GM12878 (cell line): ENCODE measurements at regions of chr17 and their contacts with region 1.

Region 1: GRCh38 chr17:49952209-49952911 is 16.6 kb upstream of the DLX4 start:
- DNase-seq: no peak
- ATAC-seq: peak; percentile 99
- H3K4me3 ChIP-seq: no peak overlapping the region
- H3K27ac ChIP-seq: no peak overlapping the region
- H3K4me1 ChIP-seq: no peaks in the 10 kb centered on the region
- H3K27me3 ChIP-seq: peaks cover 0 to 2% of the 10 kb centered on the region in 2 experiments; a peak in 3 of 4 replicates
- CTCF ChIP-seq: peak; percentile 78 to 97 (median 96)
- EP300 ChIP-seq: no peak
- POLR2A ChIP-seq: no peak
- RAD21 ChIP-seq: peak; percentile 54

Region 2: DNA sequence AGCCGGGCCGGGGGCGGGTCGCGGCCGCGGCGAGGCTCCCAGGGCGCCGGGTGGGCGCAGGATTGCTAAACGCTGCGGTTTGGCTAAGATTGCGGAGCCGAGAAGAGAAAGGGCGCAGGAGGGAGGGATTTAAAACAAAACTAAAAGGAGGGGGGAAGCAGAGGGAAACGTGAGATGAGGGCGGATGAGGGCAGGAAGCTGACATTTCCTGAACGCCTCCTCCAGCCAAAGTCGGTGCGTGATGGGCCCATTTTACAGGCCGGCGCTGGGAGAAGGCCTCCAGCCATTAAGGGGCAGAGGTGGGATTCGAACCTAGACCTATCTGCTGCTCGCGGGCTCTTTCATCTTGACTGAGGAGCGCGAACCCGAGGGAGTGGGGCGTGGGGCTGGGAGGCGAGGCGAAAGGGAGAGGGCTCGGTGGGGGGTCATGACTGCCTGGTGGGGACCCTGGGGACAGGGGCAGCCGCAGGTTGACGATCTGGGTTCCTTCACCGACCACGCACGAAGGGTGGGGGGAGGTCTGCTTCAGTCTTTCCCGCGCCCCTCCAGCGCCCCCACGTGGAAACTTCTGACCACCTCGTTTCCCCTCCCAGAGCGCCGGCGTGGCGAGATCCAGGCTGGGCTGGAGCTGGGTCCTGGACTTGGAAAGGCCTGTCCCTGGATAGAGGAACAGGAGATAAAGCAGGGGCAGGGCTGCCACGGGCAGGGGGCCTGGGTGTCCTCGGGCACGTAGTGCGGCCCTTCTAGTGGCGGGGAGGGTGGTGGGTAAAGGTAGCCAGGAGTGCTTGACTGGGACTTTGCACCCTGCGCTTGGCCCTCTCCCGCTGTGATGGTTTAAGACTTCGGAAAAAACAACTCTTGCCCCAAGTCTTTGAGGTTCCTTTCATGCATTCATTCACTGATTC is 100.7 kb before region 1 on chr17:
- CTCF ChIA-PET with region 1: no interaction called
- POLR2A ChIA-PET with region 1: no interaction called
- RAD21 ChIA-PET with region 1: no interaction called
- SMC1A ChIA-PET with region 1: no interaction called
- in situ Hi-C with region 1: no loop called
- intact Hi-C with region 1: no loop called
- DNase-seq: no peak
- ATAC-seq: peak; percentile 78
- H3K4me3 ChIP-seq: peak overlapping the region; percentile 70
- H3K27ac ChIP-seq: no peak overlapping the region
- H3K4me1 ChIP-seq: no peaks in the 10 kb centered on the region
- H3K27me3 ChIP-seq: no peaks in the 10 kb centered on the region; a peak in 3 of 4 replicates
- CTCF ChIP-seq: peak; percentile 58 to 70 (median 65)
- EP300 ChIP-seq: no peak
- POLR2A ChIP-seq: no peak; the same call in 1 of the 2 replicates
- RAD21 ChIP-seq: peak; percentile 53

Region 3: GRCh38 chr17:49939318-49939717 is 13.0 kb before region 1 on chr17:
- CTCF ChIA-PET with region 1: interaction called, 14 read pairs
- POLR2A ChIA-PET with region 1: no interaction called
- RAD21 ChIA-PET with region 1: no interaction called
- SMC1A ChIA-PET with region 1: no interaction called
- in situ Hi-C with region 1: no loop called
- intact Hi-C with region 1: no loop called
- DNase-seq: no peak
- ATAC-seq: no peak
- H3K4me3 ChIP-seq: no peak overlapping the region
- H3K27ac ChIP-seq: no peak overlapping the region
- H3K4me1 ChIP-seq: no peaks in the 10 kb centered on the region
- H3K27me3 ChIP-seq: peaks cover 1 to 6% of the 10 kb centered on the region in 2 experiments; a peak in 2 of 4 replicates
- CTCF ChIP-seq: no peak
- EP300 ChIP-seq: no peak
- POLR2A ChIP-seq: no peak
- RAD21 ChIP-seq: no peak

Region 4: GRCh38 chr17:49980703-49981197 is 28.4 kb after region 1 on chr17:
- CTCF ChIA-PET with region 1: interaction called, 11 read pairs
- POLR2A ChIA-PET with region 1: no interaction called
- RAD21 ChIA-PET with region 1: no interaction called
- SMC1A ChIA-PET with region 1: no interaction called
- in situ Hi-C with region 1: no loop called
- intact Hi-C with region 1: no loop called
- DNase-seq: no peak
- ATAC-seq: no peak
- H3K4me3 ChIP-seq: no peak overlapping the region
- H3K27ac ChIP-seq: no peak overlapping the region
- H3K4me1 ChIP-seq: no peaks in the 10 kb centered on the region
- H3K27me3 ChIP-seq: peaks cover 0 to 6% of the 10 kb centered on the region in 2 experiments; a peak in 3 of 4 replicates
- CTCF ChIP-seq: no peak
- EP300 ChIP-seq: no peak
- POLR2A ChIP-seq: no peak
- RAD21 ChIP-seq: no peak

Region 5: DNA sequence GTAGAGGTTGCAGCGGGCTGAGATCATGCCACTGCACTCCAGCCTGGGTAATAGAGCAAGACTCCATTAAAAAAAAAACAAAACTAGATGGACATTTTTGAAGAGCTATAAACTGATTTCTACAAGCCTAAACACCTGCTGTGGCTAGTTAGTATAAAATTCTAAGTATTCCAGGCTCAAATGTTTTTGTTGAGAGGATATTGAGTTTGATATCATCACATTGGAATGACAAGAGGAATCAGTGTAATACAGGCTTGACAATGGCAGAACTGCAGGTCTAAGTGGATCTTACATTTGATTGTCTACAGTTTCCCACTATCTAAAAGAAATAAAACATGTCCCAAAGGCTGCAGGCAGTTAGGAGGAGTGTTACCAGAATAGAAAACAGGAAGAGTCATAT is 66.5 kb after region 1 on chr17:
- CTCF ChIA-PET with region 1: no interaction called
- POLR2A ChIA-PET with region 1: no interaction called
- RAD21 ChIA-PET with region 1: no interaction called
- SMC1A ChIA-PET with region 1: no interaction called
- in situ Hi-C with region 1: no loop called
- intact Hi-C with region 1: no loop called
- DNase-seq: no peak
- ATAC-seq: no peak
- H3K4me3 ChIP-seq: no peak overlapping the region
- H3K27ac ChIP-seq: no peak overlapping the region
- H3K4me1 ChIP-seq: no peaks in the 10 kb centered on the region
- H3K27me3 ChIP-seq: no peaks in the 10 kb centered on the region
- CTCF ChIP-seq: no peak
- EP300 ChIP-seq: no peak
- POLR2A ChIP-seq: no peak
- RAD21 ChIP-seq: no peak

Region 6: DNA sequence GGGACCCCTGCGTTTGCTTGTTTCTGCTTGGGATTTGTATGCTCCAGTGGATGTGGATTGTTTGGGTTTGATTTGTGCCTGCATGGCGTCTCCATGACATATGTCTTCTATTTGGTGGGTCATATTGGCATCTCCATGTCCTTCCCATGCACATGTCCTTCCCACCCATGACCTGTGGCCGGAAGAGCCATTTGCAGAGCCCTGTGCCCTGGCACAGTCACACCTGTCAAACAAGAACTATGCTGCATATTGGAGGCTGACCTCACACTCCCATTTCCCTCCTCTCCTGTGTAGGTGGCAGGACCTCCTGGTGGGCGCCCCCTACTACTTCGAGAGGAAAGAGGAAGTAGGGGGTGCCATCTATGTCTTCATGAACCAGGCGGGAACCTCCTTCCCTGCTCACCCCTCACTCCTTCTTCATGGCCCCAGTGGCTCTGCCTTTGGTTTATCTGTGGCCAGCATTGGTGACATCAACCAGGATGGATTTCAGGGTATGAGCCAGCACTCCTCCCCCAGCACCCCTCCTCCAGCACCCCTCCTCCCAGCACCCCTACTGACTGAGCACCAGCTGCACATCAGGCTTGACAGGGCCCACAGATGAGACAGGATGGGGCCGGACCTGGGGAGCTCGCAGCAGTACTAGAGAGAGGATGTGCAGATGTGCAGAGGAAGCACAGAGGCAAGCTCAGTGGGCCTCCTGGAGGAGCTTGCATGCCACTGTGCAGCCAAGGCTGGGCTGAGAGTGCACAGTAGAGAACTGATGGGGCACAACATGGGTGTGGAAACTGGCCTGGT is 119.5 kb after region 1 on chr17:
- CTCF ChIA-PET with region 1: no interaction called
- POLR2A ChIA-PET with region 1: no interaction called
- RAD21 ChIA-PET with region 1: no interaction called
- SMC1A ChIA-PET with region 1: no interaction called
- in situ Hi-C with region 1: no loop called
- intact Hi-C with region 1: no loop called
- DNase-seq: no peak
- ATAC-seq: no peak
- H3K4me3 ChIP-seq: no peak overlapping the region
- H3K27ac ChIP-seq: no peak overlapping the region
- H3K4me1 ChIP-seq: no peaks in the 10 kb centered on the region
- H3K27me3 ChIP-seq: no peaks in the 10 kb centered on the region
- CTCF ChIP-seq: no peak
- EP300 ChIP-seq: no peak
- POLR2A ChIP-seq: no peak
- RAD21 ChIP-seq: no peak